ENCODE measurements at regions of chr17 and their contacts with region 1.

Region 1: GRCh38 chr17:21304091-21304490 is 19.6 kb downstream of the MAP2K3 start:
- DNase-seq: no peak
- ATAC-seq: no peak
- H3K4me3 ChIP-seq: no peak overlapping the region
- H3K27ac ChIP-seq: no peak overlapping the region
- H3K4me1 ChIP-seq: peaks cover 2% of the 10 kb centered on the region
- H3K27me3 ChIP-seq: no peaks in the 10 kb centered on the region
- CTCF ChIP-seq: no peak
- POLR2A ChIP-seq: no peak
- RAD21 ChIP-seq: no peak

Region 2: GRCh38 chr17:21772321-21772720 is 468.2 kb after region 1 on chr17:
- CTCF ChIA-PET with region 1: no interaction called
- POLR2A ChIA-PET with region 1: no interaction called
- dilution Hi-C with region 1: no loop called
- in situ Hi-C with region 1: loop called (anchors 25 kb)
- intact Hi-C with region 1: no loop called
- DNase-seq: no peak
- ATAC-seq: no peak
- H3K4me3 ChIP-seq: no peak overlapping the region
- H3K27ac ChIP-seq: no peak overlapping the region
- H3K4me1 ChIP-seq: no peaks in the 10 kb centered on the region
- H3K27me3 ChIP-seq: no peaks in the 10 kb centered on the region
- CTCF ChIP-seq: no peak
- POLR2A ChIP-seq: no peak
- RAD21 ChIP-seq: no peak

Measured in IMR-90 (cell line).